ENCODE measurements at regions of chr15 and their contacts with region 1.

Region 1: DNA sequence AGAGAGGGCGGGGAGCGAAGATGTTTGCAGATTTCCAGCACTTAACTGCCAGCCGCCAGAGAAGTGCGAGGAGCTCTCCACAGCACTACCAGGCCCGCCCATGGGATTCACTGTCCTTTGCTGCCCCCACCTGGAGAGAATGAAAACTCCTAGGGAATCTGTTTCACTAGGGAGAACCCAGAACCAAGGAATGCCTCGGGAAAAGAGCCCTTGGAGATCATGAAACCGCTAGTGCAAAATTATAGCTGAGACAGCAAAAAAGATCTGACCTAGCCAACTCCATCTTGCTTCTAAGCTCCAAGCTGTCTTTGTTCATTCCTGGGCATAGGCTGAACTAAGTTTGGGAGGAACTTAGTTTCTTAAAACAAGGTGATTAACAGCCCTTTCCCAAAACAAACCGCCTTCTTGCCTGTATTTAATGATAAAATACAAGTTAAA is 82.6 kb upstream of the GCNT3 start:
- DNase-seq: peak; percentile 70
- H3K4me3 ChIP-seq: no peak overlapping the region
- H3K27ac ChIP-seq: no peak overlapping the region
- H3K27me3 ChIP-seq: peaks cover 3% of the 10 kb centered on the region
- CTCF ChIP-seq: peak; percentile 88

Region 2: GRCh38 chr15:58957101-58957973 is 571.6 kb before region 1 on chr15:
- CTCF ChIA-PET with region 1: interaction called, 38 read pairs
- POLR2A ChIA-PET with region 1: no interaction called
- DNase-seq: no peak
- H3K4me3 ChIP-seq: no peak overlapping the region
- H3K27ac ChIP-seq: no peak overlapping the region
- H3K27me3 ChIP-seq: no peaks in the 10 kb centered on the region
- CTCF ChIP-seq: peak; percentile 86

Region 3: DNA sequence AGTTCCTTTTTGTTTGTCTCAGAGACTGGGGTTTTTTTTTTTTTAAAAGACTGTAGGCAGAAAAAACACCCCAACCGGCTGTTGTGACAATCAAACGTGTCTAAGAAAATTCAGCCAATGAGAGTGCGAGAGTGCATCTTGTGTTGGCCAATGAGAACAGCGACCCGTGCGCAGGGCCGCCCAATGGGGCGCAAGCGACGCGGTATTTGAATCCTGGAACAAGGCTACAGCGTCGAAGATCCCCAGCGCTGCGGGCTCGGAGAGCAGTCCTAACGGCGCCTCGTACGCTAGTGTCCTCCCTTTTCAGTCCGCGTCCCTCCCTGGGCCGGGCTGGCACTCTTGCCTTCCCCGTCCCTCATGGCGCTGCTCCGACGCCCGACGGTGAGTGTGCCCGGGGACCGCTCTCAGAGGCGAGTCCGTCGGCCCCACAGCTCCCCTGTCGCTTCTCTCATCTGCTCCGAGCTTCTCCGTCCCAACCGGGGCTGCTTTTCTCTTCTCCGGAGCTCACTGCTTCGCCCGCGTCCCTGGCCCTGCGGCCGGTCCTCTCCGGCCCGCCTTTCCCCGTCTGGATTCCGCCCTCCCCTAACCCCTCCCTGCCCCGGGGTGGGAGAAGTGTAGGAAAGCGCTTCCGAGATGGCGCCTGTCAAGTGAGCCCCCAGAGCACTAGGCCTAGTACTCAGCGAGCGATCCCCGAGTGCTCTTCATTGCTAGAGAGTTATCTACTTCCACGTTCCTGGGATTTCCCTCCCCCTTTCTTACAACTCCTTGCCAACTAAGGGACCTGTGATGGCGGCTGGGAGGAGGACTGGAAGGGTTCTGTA is 423.9 kb before region 1 on chr15 and contains the start of gene CCNB2:
- CTCF ChIA-PET with region 1: interaction called, 13 read pairs
- POLR2A ChIA-PET with region 1: no interaction called
- DNase-seq: peak; percentile 83
- H3K4me3 ChIP-seq: peak within 1 kb of the TSS; percentile 92
- H3K27ac ChIP-seq: peak within 1 kb of the TSS; percentile 86
- H3K27me3 ChIP-seq: no peaks in the 10 kb centered on the region
- CTCF ChIP-seq: no peak
- polyA plus RNA-seq, gene CCNB2: 19.7 and 25.9 TPM in 2 replicates

Region 4: GRCh38 chr15:59360305-59360704 is 168.7 kb before region 1 on chr15:
- CTCF ChIA-PET with region 1: no interaction called
- POLR2A ChIA-PET with region 1: no interaction called
- DNase-seq: no peak
- H3K4me3 ChIP-seq: no peak overlapping the region
- H3K27ac ChIP-seq: no peak overlapping the region
- H3K27me3 ChIP-seq: no peaks in the 10 kb centered on the region
- CTCF ChIP-seq: peak; percentile 47

Region 5: DNA sequence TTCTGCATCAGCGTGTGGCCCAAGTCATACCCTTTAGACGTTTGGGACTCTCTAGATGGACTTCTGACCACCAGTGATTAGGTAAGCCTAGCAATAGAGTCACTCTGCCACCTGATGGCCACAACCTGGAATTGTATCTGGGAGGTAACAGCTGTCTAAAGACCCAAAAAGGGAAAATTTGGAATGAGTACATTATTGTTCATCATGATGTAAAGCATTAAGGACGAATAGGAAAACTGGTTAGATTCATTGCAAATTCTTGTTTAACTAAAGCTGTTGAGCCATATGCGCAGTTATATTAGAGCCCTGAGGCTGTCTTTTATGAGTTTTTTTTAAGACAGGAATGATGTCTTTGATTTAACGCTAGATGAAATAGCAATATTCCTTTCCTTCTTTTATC is 27.4 kb before region 1 on chr15:
- CTCF ChIA-PET with region 1: interaction called, 20 read pairs
- POLR2A ChIA-PET with region 1: no interaction called
- DNase-seq: no peak
- H3K4me3 ChIP-seq: no peak overlapping the region
- H3K27ac ChIP-seq: no peak overlapping the region
- H3K27me3 ChIP-seq: peaks cover 6% of the 10 kb centered on the region
- CTCF ChIP-seq: peak; percentile 57

Region 6: GRCh38 chr15:59632714-59633113 is 103.7 kb after region 1 on chr15:
- CTCF ChIA-PET with region 1: interaction called, 25 read pairs
- POLR2A ChIA-PET with region 1: no interaction called
- DNase-seq: no peak
- H3K4me3 ChIP-seq: no peak overlapping the region
- H3K27ac ChIP-seq: no peak overlapping the region
- H3K27me3 ChIP-seq: no peaks in the 10 kb centered on the region
- CTCF ChIP-seq: peak; percentile 50

Region 7: GRCh38 chr15:59649611-59650010 is 120.6 kb after region 1 on chr15:
- CTCF ChIA-PET with region 1: interaction called, 13 read pairs
- POLR2A ChIA-PET with region 1: no interaction called
- DNase-seq: no peak
- H3K4me3 ChIP-seq: no peak overlapping the region
- H3K27ac ChIP-seq: no peak overlapping the region
- H3K27me3 ChIP-seq: no peaks in the 10 kb centered on the region
- CTCF ChIP-seq: no peak

Region 8: GRCh38 chr15:59946084-59946483 is 417.1 kb after region 1 on chr15:
- CTCF ChIA-PET with region 1: no interaction called
- POLR2A ChIA-PET with region 1: no interaction called
- DNase-seq: no peak
- H3K4me3 ChIP-seq: no peak overlapping the region
- H3K27ac ChIP-seq: no peak overlapping the region
- H3K27me3 ChIP-seq: no peaks in the 10 kb centered on the region
- CTCF ChIP-seq: no peak

Region 9: DNA sequence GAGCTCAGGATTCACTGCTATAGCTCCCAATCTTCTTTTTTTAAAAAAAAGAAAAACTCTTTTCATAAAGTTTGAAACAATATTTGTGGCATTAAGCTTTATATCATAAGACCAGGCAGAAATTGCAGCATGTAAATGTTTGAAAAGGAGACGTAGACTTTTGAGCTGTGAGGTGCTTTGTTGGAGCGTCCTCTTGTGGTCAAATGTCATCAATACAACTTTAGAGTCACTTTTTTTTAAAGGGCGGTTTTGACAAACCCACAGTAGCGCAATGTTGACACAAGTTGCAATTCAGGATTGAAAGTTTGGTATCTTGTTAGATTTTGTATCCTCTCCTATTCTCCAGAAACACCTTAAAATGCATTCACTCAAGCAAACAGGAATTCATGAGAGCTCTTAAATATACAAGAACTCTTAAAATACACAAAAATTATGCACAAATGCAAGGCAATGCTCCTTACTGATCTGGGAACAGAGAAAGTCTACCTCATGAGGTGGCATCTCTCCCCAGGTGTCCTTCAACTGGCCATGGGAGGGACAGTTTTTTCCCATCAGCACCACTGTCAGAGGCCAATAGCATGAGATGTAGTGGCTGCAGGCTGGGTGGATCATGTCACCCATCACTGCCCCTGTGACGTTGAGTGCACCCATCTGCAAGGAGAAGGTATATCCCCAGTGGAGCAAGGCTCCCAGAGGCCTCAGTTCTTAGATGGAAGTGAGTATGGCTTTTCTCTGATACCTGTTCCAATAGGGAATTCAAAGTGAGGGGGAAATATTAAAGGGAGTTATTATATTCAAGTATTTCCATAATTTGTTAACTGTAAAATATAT is 798.1 kb after region 1 on chr15:
- CTCF ChIA-PET with region 1: interaction called, 14 read pairs
- POLR2A ChIA-PET with region 1: no interaction called
- DNase-seq: peak; percentile 20
- H3K4me3 ChIP-seq: no peak overlapping the region
- H3K27ac ChIP-seq: no peak overlapping the region
- H3K27me3 ChIP-seq: peaks cover 32% of the 10 kb centered on the region
- CTCF ChIP-seq: peak; percentile 88

Measured in AG04450 (cell line).